ENCODE measurements at regions of chr16 and their contacts with region 1.

Region 1: DNA sequence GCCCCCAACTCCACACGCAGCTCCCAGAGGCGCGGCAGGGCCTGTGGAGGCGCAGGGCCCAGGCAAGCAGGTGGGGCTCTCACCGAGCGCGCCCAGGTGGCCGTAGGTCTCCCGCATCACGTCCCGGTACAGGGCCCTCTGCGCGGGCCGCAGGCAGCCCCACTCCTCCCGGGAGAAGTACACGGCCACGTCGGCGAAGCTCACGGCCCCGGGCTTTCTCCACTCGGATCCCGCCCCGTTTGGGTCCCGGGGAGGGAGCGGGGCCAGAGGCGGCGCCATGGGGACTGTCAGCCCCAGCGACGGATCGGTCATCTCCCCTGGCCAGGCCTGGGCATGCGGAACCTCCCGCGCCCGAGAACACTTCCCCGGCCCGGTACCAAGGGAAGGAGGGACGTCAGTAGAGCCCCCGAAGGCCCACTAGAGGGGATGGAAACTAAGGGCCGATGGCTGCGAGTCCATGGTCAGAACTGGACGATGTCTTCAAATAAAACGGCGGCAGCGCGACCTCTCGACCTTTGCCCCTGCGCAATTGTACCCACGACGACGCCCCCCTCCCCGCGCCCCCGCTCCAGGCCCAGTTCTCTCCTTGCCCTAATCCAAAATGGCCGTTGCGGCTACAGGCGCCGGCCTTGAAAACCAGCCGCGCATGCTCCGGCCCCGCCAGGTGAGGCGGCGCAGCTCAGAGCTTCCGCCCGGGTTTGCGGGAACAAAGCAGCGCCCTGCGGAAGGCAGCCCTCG is at the start of gene ZNF747:
- DNase-seq: peak; percentile 87 to 95 (median 90)
- ATAC-seq: peak; percentile 82 to 83
- H3K4me3 Mint-ChIP-seq: peak within 1 kb of the TSS; percentile 90 to 99 (median 95)
- H3K27ac Mint-ChIP-seq: peak within 1 kb of the TSS; percentile 87 to 100 (median 98)
- H3K4me1 Mint-ChIP-seq: peaks cover 12 to 49% (median 36%) of the 10 kb centered on the region in 4 donors
- H3K27me3 Mint-ChIP-seq: no peaks in the 10 kb centered on the region
- polyA plus RNA-seq, gene ZNF747: 9.5 to 12.0 (median 11.4) TPM

Region 2: DNA sequence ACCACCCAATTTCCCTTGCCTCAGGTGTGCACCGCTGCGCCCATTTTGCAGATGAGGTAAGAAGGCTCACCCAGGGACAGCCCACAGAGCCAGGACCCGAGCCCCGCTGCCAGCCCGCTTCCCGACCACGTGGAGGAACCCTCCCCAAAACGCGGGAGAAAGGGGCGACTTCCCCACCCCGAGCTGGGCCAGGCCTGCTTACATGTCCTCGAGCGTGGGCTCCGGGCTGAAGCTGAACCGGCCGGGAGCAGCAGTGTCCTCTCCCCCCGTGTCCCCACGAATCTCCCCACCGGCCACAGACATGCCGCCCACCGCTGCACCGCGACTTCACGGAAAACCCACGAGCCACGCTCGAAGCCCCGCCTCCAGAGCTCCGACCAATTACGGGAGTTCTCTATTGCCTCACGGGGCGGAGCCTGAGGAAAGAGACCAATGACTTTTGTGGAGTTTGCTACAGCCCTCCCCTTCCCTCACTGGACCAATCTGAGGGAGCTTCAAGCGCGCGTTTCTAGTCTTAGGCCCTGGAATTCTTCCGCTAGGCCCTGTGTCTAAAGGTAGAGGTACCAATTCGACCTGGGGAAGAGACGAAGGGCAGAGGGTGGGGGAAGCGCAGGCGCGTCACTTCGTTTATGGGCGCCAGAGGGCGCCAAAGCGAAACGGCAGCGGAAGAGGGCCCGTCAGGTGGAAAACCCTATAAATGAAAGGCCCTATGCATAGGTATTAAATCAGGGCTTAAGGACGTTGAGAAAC is 104.7 kb before region 1 on chr16 and contains the start of gene DCTPP1:
- POLR2A ChIA-PET with region 1: interaction called, 29 read pairs
- DNase-seq: peak; percentile 84 to 99 (median 96)
- ATAC-seq: peak; percentile 97
- H3K4me3 Mint-ChIP-seq: no peak within 1 kb of the TSS
- H3K27ac Mint-ChIP-seq: peak within 1 kb of the TSS in 4 of 10 donors; percentile 52 to 80 (median 75)
- H3K4me1 Mint-ChIP-seq: peaks cover 5 to 35% (median 12%) of the 10 kb centered on the region in 4 donors
- H3K27me3 Mint-ChIP-seq: no peaks in the 10 kb centered on the region
- polyA plus RNA-seq, gene DCTPP1: 63.0 to 79.6 (median 64.0) TPM

Region 3: GRCh38 chr16:30472328-30472942 is 62.1 kb before region 1 on chr16 and contains the start of gene ITGAL:
- POLR2A ChIA-PET with region 1: interaction called, 12 read pairs
- DNase-seq: peak; percentile 47 to 90 (median 78)
- ATAC-seq: peak; percentile 81 to 91
- H3K4me3 Mint-ChIP-seq: peak within 1 kb of the TSS; percentile 91 to 99 (median 97)
- H3K27ac Mint-ChIP-seq: peak within 1 kb of the TSS; percentile 89 to 98 (median 94)
- H3K4me1 Mint-ChIP-seq: peaks cover 25 to 81% (median 65%) of the 10 kb centered on the region in 4 donors
- H3K27me3 Mint-ChIP-seq: no peaks in the 10 kb centered on the region
- polyA plus RNA-seq, gene ITGAL: 121 to 157 (median 124) TPM

Region 4: DNA sequence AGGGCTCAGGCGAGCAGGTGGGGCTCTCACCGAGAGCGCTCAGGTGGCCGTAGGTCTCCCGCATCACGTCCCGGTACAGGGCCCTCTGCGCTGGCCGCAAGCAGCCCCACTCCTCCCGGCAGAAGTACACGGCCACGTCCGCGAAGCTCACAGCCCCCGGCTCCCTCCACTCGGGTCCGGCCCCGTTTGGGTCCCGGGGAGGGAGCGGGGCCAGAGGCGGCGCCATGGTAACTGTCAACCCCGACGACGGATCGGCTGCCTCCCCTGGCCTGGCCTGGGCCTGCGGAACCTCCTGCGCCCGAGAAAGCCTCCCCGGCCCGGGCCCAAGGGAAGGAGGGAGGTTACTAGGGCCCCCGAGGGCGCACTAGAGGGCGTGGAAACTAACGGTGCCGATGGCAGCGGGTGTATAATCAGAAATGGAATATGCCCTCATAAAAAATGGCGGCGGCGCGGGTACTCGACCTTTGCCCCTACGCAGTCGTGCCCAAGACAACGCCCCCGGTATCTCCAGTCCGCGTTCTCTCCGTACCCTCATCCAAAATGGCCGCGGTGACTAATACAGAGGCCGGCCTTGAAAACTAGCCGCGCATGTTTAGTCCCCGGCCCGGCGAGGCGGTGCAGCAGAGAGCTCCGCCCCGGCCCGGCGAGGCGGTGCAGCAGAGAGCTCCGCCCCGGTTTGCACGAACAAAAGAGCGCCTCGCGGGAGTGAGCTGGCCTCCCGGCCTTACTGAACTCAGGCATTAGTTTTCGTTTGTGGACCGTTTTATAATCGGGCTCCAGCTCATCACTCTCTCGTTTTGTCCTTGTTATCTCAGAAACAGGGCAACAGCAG is 23.6 kb after region 1 on chr16 and contains the start of gene ZNF764:
- POLR2A ChIA-PET with region 1: interaction called, 105 read pairs
- DNase-seq: peak; percentile 81 to 98 (median 93)
- ATAC-seq: peak; percentile 90
- H3K4me3 Mint-ChIP-seq: peak within 1 kb of the TSS; percentile 82 to 93 (median 86)
- H3K27ac Mint-ChIP-seq: peak within 1 kb of the TSS; percentile 85 to 97 (median 94)
- H3K4me1 Mint-ChIP-seq: peaks cover 13 to 53% (median 48%) of the 10 kb centered on the region in 4 donors
- H3K27me3 Mint-ChIP-seq: no peaks in the 10 kb centered on the region
- polyA plus RNA-seq, gene ZNF764: 3.6 to 6.5 (median 4.0) TPM

Region 5: DNA sequence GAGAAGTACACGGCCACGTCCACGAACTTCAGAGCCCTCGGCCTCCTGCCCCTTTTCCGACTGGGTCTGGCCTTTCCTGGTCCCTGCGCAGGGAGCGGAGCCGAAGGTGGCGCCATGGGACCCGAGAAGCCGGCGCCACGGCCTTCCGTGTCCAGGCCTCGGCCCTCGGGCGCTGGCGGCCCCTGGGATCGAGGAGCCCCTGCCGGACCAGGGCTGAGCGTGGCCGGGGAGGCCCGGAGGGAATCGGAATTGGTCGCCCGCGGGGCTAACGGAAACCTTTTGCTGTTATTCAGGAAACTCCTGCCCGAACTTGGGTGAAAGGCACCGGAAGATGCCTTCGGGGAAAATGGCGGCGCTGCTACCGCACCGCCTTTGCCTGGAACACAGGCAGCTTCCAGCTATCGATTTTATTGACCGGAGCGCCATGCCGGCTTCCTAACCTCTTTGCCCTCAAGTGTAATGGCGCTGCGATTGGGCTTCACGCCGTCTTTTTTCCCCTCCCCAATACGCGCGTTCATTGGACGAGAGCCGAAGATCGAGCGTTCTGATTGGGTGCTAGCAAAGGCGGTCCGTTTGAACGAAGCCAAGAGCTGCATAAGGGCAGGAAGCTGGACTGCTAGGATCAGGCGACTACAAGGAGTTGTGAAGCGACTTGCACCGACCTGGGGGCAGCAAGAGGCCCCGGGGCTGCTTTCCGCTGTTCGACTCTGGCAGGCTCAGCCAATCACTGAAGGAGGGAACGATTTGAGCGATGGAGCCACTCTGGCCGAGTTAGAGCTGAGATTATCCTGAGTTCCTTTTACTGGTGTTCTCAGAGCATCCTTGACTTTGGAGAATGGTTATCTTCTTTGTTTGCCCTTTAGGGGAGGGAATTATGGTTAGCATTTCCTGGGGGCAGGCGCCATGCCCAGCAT is 75.6 kb after region 1 on chr16 and contains the start of gene ZNF689:
- POLR2A ChIA-PET with region 1: interaction called, 12 read pairs
- DNase-seq: peak; percentile 77 to 99 (median 94)
- ATAC-seq: peak; percentile 92 to 93
- H3K4me3 Mint-ChIP-seq: peak within 1 kb of the TSS; percentile 87 to 97 (median 94)
- H3K27ac Mint-ChIP-seq: peak within 1 kb of the TSS; percentile 94 to 99 (median 97)
- H3K4me1 Mint-ChIP-seq: peaks cover 5 to 30% (median 27%) of the 10 kb centered on the region in 4 donors
- H3K27me3 Mint-ChIP-seq: peaks cover 0 to 1% (median 0%) of the 10 kb centered on the region in 5 donors
- polyA plus RNA-seq, gene ZNF689: 7.7 to 12.5 (median 11.0) TPM